Calu3 (cell line): ENCODE measurements at regions of chr10 and their contacts with region 1.

Region 1: DNA sequence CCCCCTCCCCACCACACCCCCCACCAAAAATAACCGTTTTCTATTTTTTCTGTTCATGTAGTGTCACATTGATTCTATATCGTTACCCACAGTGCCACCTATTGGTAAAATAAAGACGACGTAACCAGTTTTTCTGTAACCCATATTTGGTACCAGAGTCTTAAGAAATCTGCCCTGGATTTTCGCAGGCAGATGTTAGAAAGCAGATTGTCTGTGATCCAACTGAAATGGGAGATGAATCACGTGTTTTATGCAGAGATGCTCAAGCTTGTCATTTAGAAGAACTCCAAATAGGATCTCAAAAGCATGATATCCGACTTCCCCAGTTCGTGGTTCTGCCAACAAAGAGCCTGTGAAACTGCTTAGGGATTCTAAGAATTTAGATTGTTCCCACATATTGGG is 261.1 kb upstream of the CSTF2T start:
- DNase-seq: peak; percentile 6
- H3K4me3 Mint-ChIP-seq: no peak overlapping the region
- H3K27ac Mint-ChIP-seq: no peak overlapping the region
- H3K4me1 Mint-ChIP-seq: no peaks in the 10 kb centered on the region
- H3K27me3 Mint-ChIP-seq: peaks cover 24% of the 10 kb centered on the region
- CTCF ChIP-seq: no peak

Region 2: DNA sequence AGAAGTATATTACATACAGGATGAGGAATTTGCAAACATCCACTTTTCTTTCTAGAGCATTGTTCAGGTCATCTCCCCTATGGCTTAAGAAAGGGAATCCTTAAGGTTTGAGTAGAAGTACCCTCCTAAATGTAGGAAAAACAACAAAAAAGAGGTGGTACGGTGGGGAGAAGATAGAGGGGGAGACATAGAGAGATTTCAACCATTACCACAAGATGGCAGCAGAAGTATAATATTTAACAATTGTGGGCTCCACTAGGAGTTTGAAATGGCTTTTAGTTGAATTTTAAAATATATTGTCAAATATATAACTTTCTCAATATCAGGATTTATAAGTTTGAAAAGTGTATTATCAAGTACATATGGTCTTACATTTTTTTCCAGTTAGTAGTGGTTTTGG is 958.9 kb before region 1 on chr10:
- CTCF ChIA-PET with region 1: no interaction called
- intact Hi-C with region 1: loop called (anchors 10 kb)
- DNase-seq: no peak
- H3K4me3 Mint-ChIP-seq: no peak overlapping the region
- H3K27ac Mint-ChIP-seq: no peak overlapping the region
- H3K4me1 Mint-ChIP-seq: no peaks in the 10 kb centered on the region
- H3K27me3 Mint-ChIP-seq: no peaks in the 10 kb centered on the region
- CTCF ChIP-seq: peak; percentile 28

Region 3: DNA sequence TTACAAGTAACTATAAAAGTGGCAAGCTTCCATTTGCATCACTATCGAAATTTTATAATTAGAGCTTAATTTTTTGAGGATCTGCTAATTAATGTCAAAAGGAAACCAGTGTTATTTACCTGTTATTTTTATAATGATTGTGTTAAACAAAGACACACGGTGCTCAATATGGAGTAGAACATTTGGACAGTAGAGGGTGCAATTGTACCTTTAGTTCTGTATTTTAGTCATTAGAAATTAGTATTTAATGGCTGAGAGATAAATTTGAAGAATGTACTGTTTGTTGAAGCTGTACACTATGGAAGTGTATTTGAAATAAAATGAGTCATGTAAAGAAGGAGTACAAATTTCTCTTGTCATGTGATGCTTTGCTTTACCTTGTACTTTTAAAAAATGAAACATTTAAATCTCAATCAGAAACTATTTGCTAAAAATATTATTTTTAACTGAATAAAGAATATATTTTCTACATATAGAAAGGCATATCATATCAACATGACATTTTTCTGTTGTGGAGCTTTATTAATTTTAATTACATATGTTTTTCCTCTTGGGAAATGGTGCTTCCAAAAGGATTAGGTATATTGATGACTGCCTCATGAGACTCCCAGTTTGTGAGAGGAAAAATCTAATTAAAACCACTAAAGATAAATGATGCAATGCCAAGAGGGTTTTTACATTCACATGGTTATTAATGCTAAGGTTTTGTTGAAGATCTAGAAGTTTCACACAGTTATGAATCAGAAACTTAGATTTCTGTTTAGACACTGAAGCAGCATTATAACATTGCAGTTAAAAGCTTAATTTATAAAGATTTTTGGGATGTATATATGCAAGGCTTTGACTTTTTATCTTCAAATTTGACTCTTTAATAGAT is 896.6 kb before region 1 on chr10:
- CTCF ChIA-PET with region 1: no interaction called
- intact Hi-C with region 1: loop called (anchors 5 kb)
- DNase-seq: no peak
- H3K4me3 Mint-ChIP-seq: no peak overlapping the region
- H3K27ac Mint-ChIP-seq: no peak overlapping the region
- H3K4me1 Mint-ChIP-seq: no peaks in the 10 kb centered on the region
- H3K27me3 Mint-ChIP-seq: no peaks in the 10 kb centered on the region
- CTCF ChIP-seq: peak; percentile 44

Region 4: DNA sequence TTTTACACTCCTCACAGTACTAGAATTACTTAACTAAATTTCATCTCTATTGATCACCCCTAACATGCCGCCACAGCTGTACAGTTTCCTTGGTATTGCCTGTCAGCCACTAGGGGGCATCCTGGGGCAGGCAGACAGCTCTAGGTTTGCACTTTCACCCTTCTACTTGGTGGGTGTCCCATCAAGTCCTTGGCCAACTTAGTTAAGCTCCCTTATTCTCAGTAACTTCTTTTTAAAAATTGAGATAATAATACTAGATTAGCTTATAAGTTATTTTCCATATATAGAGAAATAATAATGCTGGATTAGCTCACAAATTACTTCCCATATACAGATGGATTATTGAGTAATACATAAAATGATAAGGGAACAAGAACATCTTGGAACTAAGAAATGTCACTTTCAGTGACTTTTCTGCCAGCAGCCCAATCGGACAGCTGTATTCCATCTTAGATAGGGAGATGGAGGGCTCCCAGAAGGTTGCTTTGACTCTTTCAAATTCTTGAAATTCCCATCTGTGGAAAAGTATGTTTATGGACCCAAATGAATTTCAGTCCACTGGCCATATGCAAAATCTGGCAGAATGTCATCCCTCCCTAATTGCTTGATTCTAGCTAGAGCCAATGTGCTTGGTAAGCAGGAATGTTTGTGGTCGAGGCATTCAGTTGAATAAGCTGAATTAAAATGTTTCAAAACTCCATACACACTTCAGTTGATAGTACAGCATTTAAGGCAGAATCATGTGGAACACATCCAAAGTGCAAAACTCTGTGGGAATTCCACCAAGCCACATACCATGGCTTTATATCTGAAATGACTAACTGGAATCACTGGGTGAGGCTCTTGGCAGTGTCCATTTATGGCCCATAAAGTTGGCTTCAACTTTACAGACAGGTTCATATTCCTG is 570.8 kb before region 1 on chr10:
- CTCF ChIA-PET with region 1: no interaction called
- intact Hi-C with region 1: loop called (anchors 5 kb)
- DNase-seq: peak; percentile 54
- H3K4me3 Mint-ChIP-seq: no peak overlapping the region
- H3K27ac Mint-ChIP-seq: no peak overlapping the region
- H3K4me1 Mint-ChIP-seq: no peaks in the 10 kb centered on the region
- H3K27me3 Mint-ChIP-seq: no peaks in the 10 kb centered on the region
- CTCF ChIP-seq: peak; percentile 65